ENCODE measurements at regions of chr2 and their contacts with region 1.

Region 1: DNA sequence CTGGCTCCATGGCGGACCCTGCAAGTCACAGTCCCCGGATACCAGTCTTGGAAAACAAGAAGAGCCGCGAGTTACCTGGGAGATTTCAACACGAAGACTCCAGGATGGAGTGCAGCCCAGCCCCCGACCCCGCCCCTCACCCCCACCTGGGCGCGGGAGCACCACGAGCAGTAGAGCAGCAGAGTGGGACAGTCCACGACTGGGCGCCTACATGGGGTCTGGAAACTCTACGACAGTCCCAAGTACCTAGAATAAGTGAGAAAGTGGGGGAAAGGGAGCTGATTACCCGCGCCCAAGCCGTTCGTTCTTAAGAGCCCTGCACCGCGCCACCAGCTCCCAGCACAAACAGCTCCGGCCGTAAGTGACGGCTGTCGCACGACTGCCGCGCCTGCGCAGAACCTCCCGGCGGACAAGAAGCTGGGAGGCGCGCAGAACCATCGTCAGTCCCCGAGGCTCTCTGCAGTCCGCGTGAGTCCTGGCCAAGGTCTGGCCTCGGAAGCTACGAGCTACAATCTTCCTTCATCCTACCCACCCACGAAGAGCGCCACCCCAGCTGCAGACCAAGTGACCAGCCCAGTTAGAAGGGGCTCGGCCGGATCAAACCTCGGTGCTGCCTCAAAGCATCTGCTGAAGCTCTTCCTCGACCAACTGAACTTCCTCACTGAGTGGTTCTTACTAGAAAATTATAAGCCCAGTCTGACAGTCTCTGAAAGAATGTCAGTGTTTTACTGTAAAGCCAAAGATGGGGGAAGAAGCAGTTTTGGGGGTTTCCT is at the start of gene DPY30:
- DNase-seq: peak; percentile 90 to 97 (median 96)
- H3K4me3 ChIP-seq: peak within 1 kb of the TSS; percentile 77 to 97 (median 93)
- H3K27ac ChIP-seq: peak within 1 kb of the TSS; percentile 55 to 82
- H3K4me1 ChIP-seq: peaks cover 0 to 16% (median 12%) of the 10 kb centered on the region in 4 experiments
- H3K27me3 ChIP-seq: no peaks in the 10 kb centered on the region

Region 2: DNA sequence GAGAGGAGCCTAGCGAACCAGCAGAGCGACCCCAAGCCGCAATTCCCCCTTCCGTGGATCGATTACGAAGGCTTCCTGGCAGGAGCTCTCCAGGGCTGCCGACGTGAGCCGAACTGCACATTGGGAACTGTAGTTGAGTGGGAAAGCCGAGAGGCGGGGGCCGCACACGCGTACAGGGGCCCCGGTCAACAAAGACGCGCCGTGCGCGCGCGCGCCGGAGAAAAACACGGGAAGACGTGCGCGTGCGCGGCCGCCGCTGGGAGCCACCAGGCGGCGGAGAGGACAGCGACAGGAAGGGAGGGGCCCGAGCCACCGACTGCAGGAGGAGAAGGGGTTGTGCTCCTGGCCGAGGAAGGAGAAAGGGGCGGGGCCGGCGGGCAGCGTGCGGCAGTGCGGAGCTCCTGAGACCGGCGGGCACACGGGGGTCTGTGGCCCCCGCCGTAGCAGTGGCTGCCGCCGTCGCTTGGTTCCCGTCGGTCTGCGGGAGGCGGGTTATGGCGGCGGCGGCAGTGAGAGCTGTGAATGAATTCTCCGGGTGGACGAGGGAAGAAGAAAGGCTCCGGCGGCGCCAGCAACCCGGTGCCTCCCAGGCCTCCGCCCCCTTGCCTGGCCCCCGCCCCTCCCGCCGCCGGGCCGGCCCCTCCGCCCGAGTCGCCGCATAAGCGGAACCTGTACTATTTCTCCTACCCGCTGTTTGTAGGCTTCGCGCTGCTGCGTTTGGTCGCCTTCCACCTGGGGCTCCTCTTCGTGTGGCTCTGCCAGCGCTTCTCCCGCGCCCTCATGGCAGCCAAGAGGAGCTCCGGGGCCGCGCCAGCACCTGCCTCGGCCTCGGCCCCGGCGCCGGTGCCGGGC is 23.9 kb after region 1 on chr2 and contains the start of gene SPAST:
- CTCF ChIA-PET with region 1: interaction called, 8 read pairs
- POLR2A ChIA-PET with region 1: interaction called, 16 read pairs
- DNase-seq: peak; percentile 98 to 99 (median 98)
- H3K4me3 ChIP-seq: peak within 1 kb of the TSS; percentile 78 to 96 (median 90)
- H3K27ac ChIP-seq: peak within 1 kb of the TSS; percentile 79 to 91
- H3K4me1 ChIP-seq: peaks cover 10 to 26% (median 17%) of the 10 kb centered on the region in 4 experiments
- H3K27me3 ChIP-seq: no peaks in the 10 kb centered on the region

Measured in common myeloid progenitor, CD34-positive (primary cell).